Natural killer cell (primary cell): ENCODE measurements at regions of chr11 and their contacts with region 1.

Region 1: GRCh38 chr11:75022759-75023396 is 34.1 kb downstream of the NEU3 start:
- DNase-seq: peak; percentile 64 to 85
- ATAC-seq: peak; percentile 75 to 97 (median 91)
- H3K4me3 ChIP-seq: no peak overlapping the region
- H3K4me3 Mint-ChIP-seq: no peak overlapping the region
- H3K27ac ChIP-seq: no peak overlapping the region
- H3K27ac Mint-ChIP-seq: no peak overlapping the region
- H3K4me1 ChIP-seq: no peaks in the 10 kb centered on the region
- H3K4me1 Mint-ChIP-seq: no peaks in the 10 kb centered on the region
- H3K27me3 ChIP-seq: no peaks in the 10 kb centered on the region
- H3K27me3 Mint-ChIP-seq: no peaks in the 10 kb centered on the region
- CTCF ChIP-seq: peak; percentile 91

Region 2: DNA sequence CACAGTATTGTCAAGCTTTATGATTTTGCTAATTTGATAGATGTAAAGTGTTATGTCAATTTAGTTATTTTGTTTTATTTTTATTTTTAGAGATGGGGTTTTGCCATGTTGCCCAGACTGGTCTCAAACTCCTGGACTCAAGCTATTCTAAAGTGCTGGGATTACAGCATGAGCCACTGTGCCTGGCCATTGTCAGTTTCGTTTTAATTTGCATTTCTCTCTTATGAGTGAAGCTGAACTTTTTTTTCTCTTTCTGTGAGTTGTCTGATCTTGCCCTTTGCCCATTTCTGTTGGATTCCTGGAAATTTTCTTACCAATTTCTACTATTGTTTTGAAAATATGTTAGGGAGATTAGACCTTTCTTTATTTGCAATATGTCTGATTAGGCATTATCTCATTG is 18.7 kb before region 1 on chr11:
- intact Hi-C with region 1: no loop called
- DNase-seq: no peak
- ATAC-seq: no peak
- H3K4me3 ChIP-seq: no peak overlapping the region
- H3K4me3 Mint-ChIP-seq: no peak overlapping the region
- H3K27ac ChIP-seq: no peak overlapping the region
- H3K27ac Mint-ChIP-seq: no peak overlapping the region
- H3K4me1 ChIP-seq: no peaks in the 10 kb centered on the region
- H3K4me1 Mint-ChIP-seq: no peaks in the 10 kb centered on the region
- H3K27me3 ChIP-seq: no peaks in the 10 kb centered on the region
- H3K27me3 Mint-ChIP-seq: no peaks in the 10 kb centered on the region
- CTCF ChIP-seq: no peak

Region 3: DNA sequence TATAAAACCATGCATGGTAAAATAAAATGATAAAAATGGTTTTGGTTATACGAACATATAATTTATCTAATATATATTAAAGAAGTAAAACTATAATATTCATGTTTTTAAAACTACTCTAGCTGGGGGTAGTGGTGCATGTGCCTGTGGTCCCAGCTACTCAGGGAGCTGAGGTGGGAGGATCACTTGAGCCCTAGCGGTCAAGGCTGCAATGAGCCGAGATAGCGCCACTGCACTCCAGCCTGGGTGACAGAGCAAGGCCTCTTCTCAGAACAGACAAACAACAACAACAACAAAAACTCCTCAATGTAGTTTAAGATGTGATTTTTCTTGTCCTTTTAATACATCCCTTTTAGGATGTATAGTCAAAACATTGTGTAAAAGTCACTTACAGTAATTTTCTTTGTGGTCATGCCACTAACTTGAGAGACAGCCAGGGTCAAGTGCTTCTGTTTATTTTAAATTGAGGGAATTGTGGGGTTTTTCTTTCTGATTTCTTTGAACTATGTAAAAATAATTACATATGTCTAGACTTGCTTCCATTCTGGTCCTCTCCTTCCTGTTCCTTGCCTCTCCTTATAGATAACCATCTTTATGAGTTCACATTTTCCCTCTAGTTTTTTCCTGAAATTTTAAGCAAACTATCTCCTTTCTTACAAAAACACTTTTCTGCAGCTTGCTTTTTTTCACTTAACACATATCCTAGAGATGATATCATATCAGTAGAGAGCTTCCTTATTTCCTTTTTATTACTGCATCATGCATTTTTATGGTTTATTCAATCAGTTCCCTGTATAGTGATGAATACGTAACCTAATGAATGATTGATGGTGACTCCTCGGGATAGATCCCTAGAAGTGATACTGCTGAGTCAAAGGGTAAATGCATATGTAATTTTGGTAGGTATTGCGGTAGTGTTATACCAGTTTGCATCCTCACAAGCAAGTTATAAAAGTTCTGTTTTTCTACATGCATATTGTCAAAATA is 64.7 kb after region 1 on chr11:
- intact Hi-C with region 1: no loop called
- DNase-seq: no peak
- ATAC-seq: no peak
- H3K4me3 ChIP-seq: no peak overlapping the region
- H3K4me3 Mint-ChIP-seq: no peak overlapping the region
- H3K27ac ChIP-seq: no peak overlapping the region
- H3K27ac Mint-ChIP-seq: no peak overlapping the region
- H3K4me1 ChIP-seq: no peaks in the 10 kb centered on the region
- H3K4me1 Mint-ChIP-seq: no peaks in the 10 kb centered on the region
- H3K27me3 ChIP-seq: peaks cover 2% of the 10 kb centered on the region
- H3K27me3 Mint-ChIP-seq: peaks cover 27 to 78% of the 10 kb centered on the region in 2 donors
- CTCF ChIP-seq: no peak

Region 4: DNA sequence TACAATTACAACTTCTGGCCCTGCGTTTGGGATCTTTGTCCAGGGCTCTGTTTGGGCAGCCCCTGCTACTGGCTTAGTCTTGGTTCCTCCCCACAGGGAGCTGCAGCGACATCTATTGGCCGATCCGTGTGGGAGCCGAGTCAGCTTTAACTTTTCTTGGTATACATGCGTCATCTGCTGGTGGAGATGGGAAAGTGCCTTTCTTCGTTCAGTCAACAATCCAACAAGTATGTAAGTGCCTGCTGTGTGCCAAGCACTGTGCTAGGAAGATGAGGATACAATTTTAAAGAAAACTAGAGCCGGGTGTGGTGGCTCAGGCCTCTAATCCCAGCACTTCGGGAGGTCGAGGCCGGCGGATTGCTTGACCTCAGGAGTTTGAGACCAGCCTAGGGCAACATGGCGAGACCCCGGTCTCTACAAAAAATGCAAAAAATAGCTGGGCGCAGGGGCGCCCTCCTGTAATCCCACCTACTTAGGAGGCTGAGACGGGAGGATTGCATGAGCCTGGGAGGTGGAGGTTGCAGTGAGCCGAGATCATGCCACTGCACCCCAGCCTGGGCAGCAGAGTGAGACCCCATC is 225.9 kb after region 1 on chr11:
- intact Hi-C with region 1: loop called (anchors 1 kb)
- DNase-seq: peak; percentile 82 to 94
- ATAC-seq: peak; percentile 94 to 100 (median 99)
- H3K4me3 ChIP-seq: no peak overlapping the region
- H3K4me3 Mint-ChIP-seq: no peak overlapping the region
- H3K27ac ChIP-seq: no peak overlapping the region
- H3K27ac Mint-ChIP-seq: no peak overlapping the region
- H3K4me1 ChIP-seq: peaks cover 3% of the 10 kb centered on the region
- H3K4me1 Mint-ChIP-seq: peaks cover 0 to 7% of the 10 kb centered on the region in 2 donors
- H3K27me3 ChIP-seq: peaks cover 2% of the 10 kb centered on the region
- H3K27me3 Mint-ChIP-seq: peaks cover 14 to 27% of the 10 kb centered on the region in 2 donors
- CTCF ChIP-seq: peak; percentile 100